ENCODE measurements at regions of chr2 and their contacts with region 1.

Region 1: GRCh38 chr2:14475994-14476393 is 156.5 kb upstream of the LRATD1 start:
- DNase-seq: no peak
- ATAC-seq: no peak

Region 2: DNA sequence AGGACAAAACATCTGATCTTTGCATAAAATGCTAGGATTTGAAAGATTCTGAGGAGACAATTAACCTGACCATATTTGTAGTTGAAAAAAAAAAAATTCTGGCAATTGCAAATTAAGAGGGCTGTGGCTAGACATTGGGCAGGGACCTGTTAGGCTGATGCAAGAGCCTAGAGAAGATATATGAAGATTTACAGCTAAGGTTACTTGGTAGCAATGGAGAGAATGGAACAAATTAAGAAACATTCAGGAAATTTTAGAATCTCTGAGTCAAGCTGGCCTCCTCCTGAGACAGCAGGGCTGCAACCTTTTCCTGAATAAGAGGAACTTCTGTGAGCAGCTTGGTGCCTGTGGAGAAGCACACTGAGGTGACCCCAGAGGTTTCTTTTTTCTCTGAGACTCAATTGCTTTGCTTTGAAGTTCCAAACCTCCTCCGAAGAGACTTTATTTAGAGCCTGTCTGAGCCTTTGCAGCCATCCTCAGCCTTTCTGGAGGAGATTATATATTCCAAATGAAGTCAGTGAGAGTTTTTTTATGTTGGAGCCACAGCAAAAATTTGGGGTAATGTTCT is 37.9 kb after region 1 on chr2:
- intact Hi-C with region 1: loop called (anchors 2 kb)
- DNase-seq: no peak
- ATAC-seq: no peak

Measured in sciatic nerve (tissue), 2 donors.